ENCODE measurements at regions of chr6 and their contacts with region 1.

Region 1: DNA sequence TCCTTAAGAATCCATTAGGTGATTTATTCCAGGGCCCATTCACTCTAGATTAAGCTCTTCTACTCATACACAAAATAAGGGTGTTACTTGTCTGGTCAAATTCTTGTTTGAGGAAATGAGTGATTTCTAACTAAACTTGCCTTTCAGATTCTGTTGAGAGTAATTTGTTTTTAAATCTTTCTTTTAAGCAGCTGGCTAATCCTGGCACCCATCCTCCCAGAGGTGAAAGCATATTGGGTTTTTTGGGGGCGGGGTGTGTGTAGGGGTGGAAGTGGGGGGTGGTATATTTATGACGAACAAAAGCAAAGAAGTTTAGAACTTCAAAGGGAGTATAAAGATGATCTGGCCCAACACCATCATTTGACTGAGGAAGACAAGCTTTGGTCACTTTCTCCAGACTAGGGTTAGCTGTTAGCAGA is 94.7 kb downstream of the RTN4IP1 start:
- DNase-seq: no peak
- ATAC-seq: peak; percentile 14
- H3K4me3 ChIP-seq: no peak overlapping the region
- H3K4me3 Mint-ChIP-seq: no peak overlapping the region
- H3K27ac ChIP-seq: peak overlapping the region in 1 of 2 donors; percentile 68
- H3K27ac Mint-ChIP-seq: peak overlapping the region; percentile 86
- H3K4me1 ChIP-seq: peaks cover 41 to 45% of the 10 kb centered on the region in 2 donors
- H3K4me1 Mint-ChIP-seq: peaks cover 76% of the 10 kb centered on the region
- H3K27me3 ChIP-seq: no peaks in the 10 kb centered on the region
- H3K27me3 Mint-ChIP-seq: no peaks in the 10 kb centered on the region
- CTCF ChIP-seq: no peak

Region 2: GRCh38 chr6:106546691-106547414 is 12.3 kb after region 1 on chr6:
- CTCF ChIA-PET with region 1: interaction called, 6 read pairs
- POLR2A ChIA-PET with region 1: interaction called, 3 read pairs
- intact Hi-C with region 1: loop called (anchors 1 kb)
- DNase-seq: peak; percentile 86
- ATAC-seq: peak; percentile 80
- H3K4me3 ChIP-seq: peak overlapping the region in 1 of 5 experiments; percentile 42
- H3K4me3 Mint-ChIP-seq: peak overlapping the region; percentile 80
- H3K27ac ChIP-seq: peak overlapping the region; percentile 88 to 93
- H3K27ac Mint-ChIP-seq: peak overlapping the region; percentile 99
- H3K4me1 ChIP-seq: peaks cover 31 to 35% of the 10 kb centered on the region in 2 donors
- H3K4me1 Mint-ChIP-seq: peaks cover 48% of the 10 kb centered on the region
- H3K27me3 ChIP-seq: no peaks in the 10 kb centered on the region
- H3K27me3 Mint-ChIP-seq: no peaks in the 10 kb centered on the region
- CTCF ChIP-seq: no peak

Region 3: DNA sequence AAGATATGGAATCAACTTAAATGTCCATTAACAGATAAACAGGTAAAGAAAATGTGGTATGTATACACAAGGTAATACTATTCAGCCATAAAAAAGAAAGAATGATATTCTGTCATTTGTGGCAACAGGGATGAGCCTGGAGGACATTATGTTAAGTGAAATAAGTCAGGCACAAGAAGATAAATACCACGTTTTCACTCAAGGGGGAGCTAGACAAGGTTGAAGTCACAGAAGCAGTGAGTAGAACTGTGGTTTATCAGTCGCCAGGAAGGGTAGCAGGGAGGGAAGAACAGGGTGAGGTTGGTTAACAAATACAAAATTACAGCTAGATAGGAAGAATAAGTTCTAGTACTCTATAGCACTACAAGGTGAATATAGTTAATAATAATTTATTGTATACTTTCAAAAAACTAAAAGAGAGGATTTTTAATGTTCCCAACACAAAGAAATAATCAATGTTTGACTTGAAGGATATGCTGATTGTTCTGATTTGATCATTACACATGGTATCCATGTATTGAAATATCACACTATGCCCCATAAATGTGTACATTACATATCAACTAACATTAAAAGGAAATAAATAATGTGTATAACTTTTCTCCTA is 73.6 kb after region 1 on chr6:
- CTCF ChIA-PET with region 1: no interaction called
- POLR2A ChIA-PET with region 1: no interaction called
- intact Hi-C with region 1: no loop called
- DNase-seq: peak; percentile 85
- ATAC-seq: peak; percentile 89
- H3K4me3 ChIP-seq: no peak overlapping the region
- H3K4me3 Mint-ChIP-seq: no peak overlapping the region
- H3K27ac ChIP-seq: no peak overlapping the region
- H3K27ac Mint-ChIP-seq: no peak overlapping the region
- H3K4me1 ChIP-seq: peaks cover 25 to 39% of the 10 kb centered on the region in 2 donors
- H3K4me1 Mint-ChIP-seq: peaks cover 43% of the 10 kb centered on the region
- H3K27me3 ChIP-seq: no peaks in the 10 kb centered on the region
- H3K27me3 Mint-ChIP-seq: no peaks in the 10 kb centered on the region
- CTCF ChIP-seq: peak; percentile 92